ENCODE measurements at regions of chrX and their contacts with region 1.

Region 1: DNA sequence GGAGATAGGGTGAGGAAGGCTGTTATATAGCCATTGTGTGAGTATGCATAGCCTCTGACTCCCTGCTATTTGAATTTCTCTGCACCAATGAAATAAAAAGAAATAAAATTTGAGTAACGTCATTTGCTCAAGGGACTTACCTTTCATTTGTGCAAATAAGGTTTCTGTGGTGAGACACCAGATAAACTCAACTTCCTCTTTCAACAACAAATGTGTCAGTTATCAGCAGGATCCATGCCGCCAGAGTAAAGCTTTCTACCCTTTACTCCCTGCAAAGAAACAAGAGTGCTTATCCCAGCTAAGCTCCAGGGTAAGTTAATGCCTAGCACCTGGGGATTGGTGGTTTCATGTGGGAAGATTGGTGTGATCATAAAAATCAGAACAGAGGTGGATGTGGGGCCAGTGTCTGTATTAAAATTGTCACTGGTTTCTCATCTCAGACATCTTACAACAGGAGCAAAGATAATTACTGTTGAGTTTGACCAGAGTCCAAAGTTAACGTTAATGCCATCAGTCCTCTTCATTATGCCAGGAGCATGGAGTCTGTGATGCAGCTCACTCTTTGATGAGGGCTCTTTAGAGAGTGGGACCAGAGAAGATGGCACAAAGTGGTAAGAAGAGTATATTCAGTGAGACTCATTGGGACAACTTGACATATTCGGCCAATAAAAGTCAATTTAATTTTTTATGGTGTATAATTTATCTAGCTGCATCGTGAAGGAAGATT is at the start of gene P2RY10:
- DNase-seq: peak; percentile 70
- H3K4me3 ChIP-seq: peak within 1 kb of the TSS; percentile 72
- H3K27ac ChIP-seq: peak within 1 kb of the TSS; percentile 70
- H3K4me1 ChIP-seq: peaks cover 48% of the 10 kb centered on the region
- CTCF ChIP-seq: no peak
- total RNA-seq, gene P2RY10: 8.1 and 10.3 TPM in 2 replicates

Region 2: DNA sequence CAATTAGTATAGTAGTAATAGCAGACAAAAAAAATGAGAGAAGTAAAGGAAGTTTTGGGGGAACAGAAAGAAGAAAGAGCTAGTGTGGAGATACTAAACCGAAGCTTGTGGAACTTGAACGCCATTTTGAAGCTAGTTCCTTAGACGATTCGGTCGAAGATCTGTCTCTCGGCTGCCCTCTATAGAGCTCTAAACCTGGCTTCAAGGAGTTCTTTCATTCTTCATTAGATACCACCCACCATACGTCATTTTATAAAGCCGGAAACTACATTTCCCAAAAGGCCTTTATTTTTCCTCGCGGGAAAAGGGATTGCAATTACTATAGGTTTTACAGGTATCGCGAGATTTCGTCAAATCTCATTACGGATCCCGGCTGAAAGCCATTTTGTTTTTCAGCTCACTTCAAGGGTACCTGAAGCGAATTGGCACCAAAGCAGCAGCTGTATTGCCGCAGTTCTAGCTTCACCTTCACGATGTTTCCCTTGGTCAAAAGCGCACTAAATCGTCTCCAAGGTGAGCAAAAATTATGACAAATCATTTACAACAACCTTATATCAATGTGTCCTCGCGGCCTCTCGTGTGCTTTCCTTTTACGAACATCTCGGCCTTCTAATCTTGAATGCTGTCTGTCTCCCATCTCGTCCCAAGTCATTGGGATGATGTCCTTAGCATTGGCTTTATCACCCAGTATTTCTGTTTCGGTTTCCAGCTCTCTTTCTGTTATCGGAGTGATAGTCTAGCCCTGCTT is 1046.1 kb before region 1 on chrX and contains the start of gene COX7B:
- CTCF ChIA-PET with region 1: no interaction called
- POLR2A ChIA-PET with region 1: no interaction called
- intact Hi-C with region 1: loop called (anchors 5 kb)
- DNase-seq: peak; percentile 96
- H3K4me3 ChIP-seq: peak within 1 kb of the TSS; percentile 91
- H3K27ac ChIP-seq: peak within 1 kb of the TSS; percentile 82
- H3K4me1 ChIP-seq: no peaks in the 10 kb centered on the region
- CTCF ChIP-seq: peak; percentile 70
- total RNA-seq, gene COX7B: 189 and 199 TPM in 2 replicates

Region 3: DNA sequence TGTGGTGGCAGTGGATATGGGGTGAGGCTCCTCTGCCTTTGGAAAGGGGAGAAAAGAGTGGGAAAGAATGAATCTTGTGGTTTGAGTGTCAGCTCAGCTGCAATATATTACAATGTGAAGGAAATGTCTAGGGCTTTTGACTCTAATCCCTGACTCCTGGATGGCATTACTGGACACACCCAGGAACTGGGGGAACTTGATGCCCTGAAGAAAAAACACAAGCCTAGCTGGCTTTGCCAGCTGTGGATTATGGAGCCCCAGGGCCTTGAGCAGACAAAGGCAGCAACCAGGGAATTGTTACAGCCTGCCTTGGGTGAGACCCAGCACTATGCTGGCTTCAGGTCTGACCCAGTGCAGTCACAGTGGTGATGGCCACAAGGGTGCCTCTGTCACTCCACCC is 560.9 kb before region 1 on chrX:
- CTCF ChIA-PET with region 1: no interaction called
- POLR2A ChIA-PET with region 1: no interaction called
- intact Hi-C with region 1: no loop called
- DNase-seq: no peak
- H3K4me3 ChIP-seq: no peak overlapping the region
- H3K27ac ChIP-seq: no peak overlapping the region
- H3K4me1 ChIP-seq: no peaks in the 10 kb centered on the region
- CTCF ChIP-seq: no peak

Region 4: DNA sequence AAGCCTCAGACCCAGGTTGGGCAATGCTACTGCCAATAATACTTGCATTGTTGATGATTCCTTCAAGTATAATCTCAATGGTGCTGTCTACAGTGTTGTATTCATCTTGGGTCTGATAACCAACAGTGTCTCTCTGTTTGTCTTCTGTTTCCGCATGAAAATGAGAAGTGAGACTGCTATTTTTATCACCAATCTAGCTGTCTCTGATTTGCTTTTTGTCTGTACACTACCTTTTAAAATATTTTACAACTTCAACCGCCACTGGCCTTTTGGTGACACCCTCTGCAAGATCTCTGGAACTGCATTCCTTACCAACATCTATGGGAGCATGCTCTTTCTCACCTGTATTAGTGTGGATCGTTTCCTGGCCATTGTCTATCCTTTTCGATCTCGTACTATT is 190.4 kb before region 1 on chrX:
- CTCF ChIA-PET with region 1: no interaction called
- POLR2A ChIA-PET with region 1: no interaction called
- intact Hi-C with region 1: loop called (anchors 10 kb)
- DNase-seq: peak; percentile 74
- H3K4me3 ChIP-seq: peak overlapping the region; percentile 34
- H3K27ac ChIP-seq: peak overlapping the region; percentile 50
- H3K4me1 ChIP-seq: peaks cover 36% of the 10 kb centered on the region
- CTCF ChIP-seq: peak; percentile 63

Region 5: DNA sequence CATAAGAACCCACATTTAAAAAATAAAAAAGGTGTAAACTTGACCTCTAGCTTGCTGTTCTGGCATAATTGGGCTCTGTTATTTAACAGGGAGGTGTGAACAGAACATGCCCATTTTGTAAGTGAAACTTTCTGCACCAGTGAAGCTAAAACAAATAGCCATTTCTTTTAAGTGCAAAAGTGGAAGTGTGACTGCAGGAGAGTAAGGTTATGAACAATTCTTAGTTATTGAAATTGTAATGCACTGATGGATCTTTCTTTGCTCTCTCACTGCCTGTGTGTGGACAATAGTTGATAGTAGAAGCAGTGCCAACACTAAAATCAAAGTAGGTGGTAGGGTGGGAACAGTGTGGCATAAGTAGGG is 12.4 kb after region 1 on chrX:
- CTCF ChIA-PET with region 1: interaction called, 3 read pairs
- POLR2A ChIA-PET with region 1: interaction called, 20 read pairs
- intact Hi-C with region 1: no loop called
- DNase-seq: peak; percentile 28
- H3K4me3 ChIP-seq: peak overlapping the region; percentile 17
- H3K27ac ChIP-seq: peak overlapping the region; percentile 49
- H3K4me1 ChIP-seq: peaks cover 25% of the 10 kb centered on the region
- CTCF ChIP-seq: no peak

Region 6: GRCh38 chrX:79146640-79147390 is 201.5 kb after region 1 on chrX:
- CTCF ChIA-PET with region 1: no interaction called
- POLR2A ChIA-PET with region 1: interaction called, 3 read pairs
- intact Hi-C with region 1: loop called (anchors 5 kb)
- DNase-seq: peak; percentile 32
- H3K4me3 ChIP-seq: peak overlapping the region; percentile 73
- H3K27ac ChIP-seq: peak overlapping the region; percentile 77
- H3K4me1 ChIP-seq: peaks cover 48% of the 10 kb centered on the region
- CTCF ChIP-seq: no peak

Region 7: DNA sequence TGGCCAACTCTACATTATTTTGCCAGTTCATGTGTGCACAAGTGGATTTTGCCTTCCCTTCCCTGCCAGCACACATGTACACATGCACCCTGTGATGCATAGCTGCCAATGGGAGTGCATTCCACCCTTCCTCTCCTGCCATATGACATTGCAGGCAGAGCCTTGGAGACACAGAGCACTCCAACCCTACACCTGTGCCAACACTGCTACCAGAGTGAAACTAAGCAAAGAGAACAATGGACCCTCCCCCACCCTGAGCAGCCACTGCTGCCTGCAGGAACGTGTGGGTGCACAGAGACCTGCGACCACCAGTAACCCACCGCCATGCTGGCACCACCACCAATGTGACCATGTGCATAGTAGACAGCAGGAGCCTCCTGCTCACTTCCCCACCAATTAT is 343.4 kb after region 1 on chrX:
- CTCF ChIA-PET with region 1: no interaction called
- POLR2A ChIA-PET with region 1: no interaction called
- intact Hi-C with region 1: no loop called
- DNase-seq: no peak
- H3K4me3 ChIP-seq: no peak overlapping the region
- H3K27ac ChIP-seq: no peak overlapping the region
- H3K4me1 ChIP-seq: no peaks in the 10 kb centered on the region
- CTCF ChIP-seq: no peak

Measured in OCI-LY7 (cell line).